Gastrocnemius medialis (tissue), 4 donors: ENCODE measurements at regions of chr6 and their contacts with region 1.

Region 1: GRCh38 chr6:41027799-41028628 is 11.0 kb downstream of the UNC5CL start:
- DNase-seq: peak; percentile 67 to 79
- ATAC-seq: peak; percentile 82 to 91
- H3K4me3 ChIP-seq: peak overlapping the region; percentile 60 to 79 (median 70)
- H3K27ac ChIP-seq: peak overlapping the region; percentile 81 to 85 (median 82)
- H3K4me1 ChIP-seq: peaks cover 15 to 16% of the 10 kb centered on the region in 2 donors
- H3K27me3 ChIP-seq: no peaks in the 10 kb centered on the region
- CTCF ChIP-seq: peak; percentile 99 to 100 (median 99)
- POLR2A ChIP-seq: no peak

Region 2: DNA sequence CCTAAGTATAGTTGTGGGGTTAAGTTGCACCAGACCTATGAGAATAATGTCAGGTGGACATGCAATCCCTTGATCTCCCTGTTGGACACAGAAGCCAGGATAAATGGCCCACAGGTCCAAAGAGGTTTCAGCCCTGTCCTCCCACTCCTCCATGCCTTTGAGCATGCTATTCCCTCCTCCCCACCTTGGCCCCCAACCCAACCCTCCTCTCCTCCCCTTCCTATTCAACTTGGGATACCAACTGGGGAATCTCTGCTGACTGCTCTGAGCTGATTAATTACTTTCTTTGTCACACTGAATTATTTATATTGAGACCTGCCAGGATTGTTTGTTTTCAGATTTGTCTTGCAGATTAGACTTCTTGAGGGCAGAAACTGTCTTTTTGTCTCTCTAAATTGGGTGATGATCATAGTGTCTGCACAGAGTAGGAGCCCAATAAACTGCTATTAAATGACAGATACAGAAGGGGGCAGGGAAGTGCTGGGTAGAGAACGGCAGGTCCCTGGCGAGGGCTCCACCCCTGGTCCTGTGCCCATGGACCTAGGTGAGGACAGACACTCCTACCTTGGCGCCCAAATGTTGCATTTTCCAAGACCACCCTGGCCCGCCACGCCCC is 109.9 kb before region 1 on chr6:
- in situ Hi-C with region 1: no loop called
- intact Hi-C with region 1: loop called (anchors 1 kb)
- DNase-seq: no peak
- ATAC-seq: no peak
- H3K4me3 ChIP-seq: no peak overlapping the region
- H3K27ac ChIP-seq: no peak overlapping the region
- H3K4me1 ChIP-seq: no peaks in the 10 kb centered on the region
- H3K27me3 ChIP-seq: no peaks in the 10 kb centered on the region
- CTCF ChIP-seq: no peak
- POLR2A ChIP-seq: no peak

Region 3: DNA sequence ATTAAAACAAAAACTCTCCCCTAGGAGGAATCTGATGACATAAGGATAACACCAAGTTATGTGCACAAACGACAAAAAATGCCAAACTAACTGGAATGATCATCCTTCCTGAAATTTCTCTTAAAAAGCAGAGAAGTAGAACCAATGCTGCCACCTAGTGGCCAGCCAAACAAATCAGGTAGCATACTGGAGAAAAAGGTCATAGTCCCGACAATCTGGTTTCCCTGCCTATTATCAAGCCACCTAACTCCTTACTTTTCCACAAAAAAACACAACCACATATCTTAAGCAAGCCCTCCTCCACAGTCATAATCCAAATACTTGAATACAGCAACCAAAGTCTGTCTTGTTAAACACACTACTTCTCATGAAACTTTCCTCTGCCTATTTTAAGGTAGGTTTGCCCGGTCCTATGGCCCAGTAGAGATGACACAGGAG is 38.9 kb after region 1 on chr6:
- in situ Hi-C with region 1: loop called in 2 of 4 experiments (anchors 5 kb)
- intact Hi-C with region 1: loop called (anchors 1 kb)
- DNase-seq: peak; percentile 52 to 72
- ATAC-seq: no peak
- H3K4me3 ChIP-seq: no peak overlapping the region
- H3K27ac ChIP-seq: peak overlapping the region; percentile 96 to 99 (median 98)
- H3K4me1 ChIP-seq: peaks cover 36 to 48% of the 10 kb centered on the region in 2 donors
- H3K27me3 ChIP-seq: no peaks in the 10 kb centered on the region
- CTCF ChIP-seq: peak; percentile 83 to 86 (median 86)
- POLR2A ChIP-seq: no peak